Activated naive CD4-positive, alpha-beta T cell treated with anti-CD3 and anti-CD28 coated beads, Interleukin-2, amount 10 ng/mL, durations not matched to agents 7 days and 5 days (primary cell): ENCODE measurements at regions of chr3 and their contacts with region 1.

Region 1: DNA sequence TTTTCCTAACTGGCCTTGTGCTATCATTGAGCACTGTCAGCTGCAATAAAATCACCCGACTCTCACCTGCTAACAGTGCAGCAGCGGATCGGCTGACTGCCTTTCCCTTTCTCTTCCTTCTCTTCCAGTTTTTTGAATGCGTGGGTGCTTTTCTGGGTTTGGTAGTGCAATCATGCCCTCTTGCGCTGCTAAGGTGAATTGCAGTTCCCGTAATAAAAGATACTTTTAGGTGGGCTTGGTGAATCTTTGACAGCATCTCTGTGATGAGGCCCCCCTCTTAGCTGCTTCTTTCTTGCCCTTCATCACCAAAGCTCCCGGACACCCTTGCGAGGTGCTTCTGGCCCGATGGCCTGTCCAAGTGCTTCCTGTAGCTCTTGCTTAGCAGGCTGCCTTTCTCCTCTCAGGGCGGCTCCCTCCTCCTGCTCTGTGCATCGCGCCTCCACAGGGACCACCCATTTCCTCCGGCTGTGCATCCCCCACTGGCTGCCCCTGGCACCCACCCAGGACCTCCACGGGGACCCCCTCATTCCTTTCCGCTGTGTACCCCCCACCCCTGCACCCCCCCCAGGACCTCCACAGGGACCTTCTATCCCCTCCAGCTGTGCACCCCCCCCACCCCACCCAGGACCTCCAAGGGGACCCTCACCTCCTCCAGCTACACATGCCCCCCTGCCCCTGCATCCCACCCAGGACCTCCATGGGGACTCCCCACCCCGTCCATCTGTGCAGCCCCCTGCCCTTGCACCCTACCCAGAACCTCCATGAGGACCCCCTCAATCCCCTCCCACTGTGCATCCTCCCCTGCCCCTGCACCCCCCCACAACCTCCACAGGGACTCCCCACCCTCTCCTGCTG is 50.8 kb upstream of the RPL32 start:
- DNase-seq: peak; percentile 58
- H3K4me3 Mint-ChIP-seq: no peak overlapping the region
- H3K27ac Mint-ChIP-seq: no peak overlapping the region
- H3K4me1 Mint-ChIP-seq: peaks cover 5% of the 10 kb centered on the region
- H3K27me3 Mint-ChIP-seq: peaks cover 46% of the 10 kb centered on the region

Region 2: GRCh38 chr3:12689993-12690617 is 202.1 kb before region 1 on chr3:
- CTCF ChIA-PET with region 1: no interaction called
- DNase-seq: no peak
- H3K4me3 Mint-ChIP-seq: no peak overlapping the region
- H3K27ac Mint-ChIP-seq: no peak overlapping the region
- H3K4me1 Mint-ChIP-seq: no peaks in the 10 kb centered on the region
- H3K27me3 Mint-ChIP-seq: peaks cover 14% of the 10 kb centered on the region

Region 3: GRCh38 chr3:12782172-12782815 is 109.9 kb before region 1 on chr3:
- CTCF ChIA-PET with region 1: interaction called, 28 read pairs
- DNase-seq: no peak
- H3K4me3 Mint-ChIP-seq: no peak overlapping the region
- H3K27ac Mint-ChIP-seq: no peak overlapping the region
- H3K4me1 Mint-ChIP-seq: no peaks in the 10 kb centered on the region
- H3K27me3 Mint-ChIP-seq: peaks cover 20% of the 10 kb centered on the region

Region 4: DNA sequence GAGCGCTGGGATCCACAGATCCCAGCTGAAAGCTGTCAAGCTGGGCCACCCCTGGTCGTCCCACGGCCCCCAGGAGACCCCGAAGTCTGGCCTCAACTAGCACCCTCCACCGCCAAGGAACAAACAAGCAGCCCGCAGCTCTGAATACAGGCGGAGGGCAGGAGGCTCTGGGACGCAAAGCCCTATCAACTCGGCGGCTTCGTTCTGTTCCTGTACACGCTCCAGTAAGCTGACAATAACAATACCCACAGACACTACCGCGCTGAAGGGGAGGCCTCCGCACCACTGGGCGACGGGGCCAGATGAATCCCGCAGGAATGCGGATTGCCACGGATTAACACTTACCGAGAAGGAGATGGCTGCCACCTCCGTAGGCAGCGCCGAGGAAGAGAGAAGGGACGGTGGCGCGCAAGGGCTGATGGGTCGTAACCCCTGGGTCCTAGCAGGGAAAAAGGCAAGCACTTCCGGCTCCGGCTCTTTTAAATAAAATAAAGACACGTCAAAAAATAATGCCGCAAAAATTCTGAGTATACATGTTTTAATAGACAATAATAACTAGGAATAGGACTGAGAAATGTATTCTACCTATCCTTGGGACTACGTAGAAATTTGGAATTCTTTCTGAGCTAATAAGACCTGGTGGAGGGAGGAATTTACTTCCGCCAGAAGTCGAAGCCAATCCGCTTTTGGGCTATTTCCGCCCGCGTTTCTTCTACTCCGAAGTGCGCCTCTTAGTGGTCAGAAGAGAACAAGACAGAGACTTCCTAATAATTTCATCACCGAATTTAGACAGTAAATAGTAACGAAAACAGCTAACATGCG is 50.9 kb before region 1 on chr3 and contains the start of gene RPL32:
- CTCF ChIA-PET with region 1: interaction called, 10 read pairs
- DNase-seq: peak; percentile 89
- H3K4me3 Mint-ChIP-seq: peak within 1 kb of the TSS; percentile 95
- H3K27ac Mint-ChIP-seq: peak within 1 kb of the TSS; percentile 98
- H3K4me1 Mint-ChIP-seq: peaks cover 49% of the 10 kb centered on the region
- H3K27me3 Mint-ChIP-seq: no peaks in the 10 kb centered on the region

Region 5: GRCh38 chr3:12868039-12869034 is 23.9 kb before region 1 on chr3:
- CTCF ChIA-PET with region 1: interaction called, 70 read pairs
- DNase-seq: peak; percentile 66
- H3K4me3 Mint-ChIP-seq: peak overlapping the region; percentile 56
- H3K27ac Mint-ChIP-seq: no peak overlapping the region
- H3K4me1 Mint-ChIP-seq: peaks cover 11% of the 10 kb centered on the region
- H3K27me3 Mint-ChIP-seq: peaks cover 79% of the 10 kb centered on the region

Region 6: DNA sequence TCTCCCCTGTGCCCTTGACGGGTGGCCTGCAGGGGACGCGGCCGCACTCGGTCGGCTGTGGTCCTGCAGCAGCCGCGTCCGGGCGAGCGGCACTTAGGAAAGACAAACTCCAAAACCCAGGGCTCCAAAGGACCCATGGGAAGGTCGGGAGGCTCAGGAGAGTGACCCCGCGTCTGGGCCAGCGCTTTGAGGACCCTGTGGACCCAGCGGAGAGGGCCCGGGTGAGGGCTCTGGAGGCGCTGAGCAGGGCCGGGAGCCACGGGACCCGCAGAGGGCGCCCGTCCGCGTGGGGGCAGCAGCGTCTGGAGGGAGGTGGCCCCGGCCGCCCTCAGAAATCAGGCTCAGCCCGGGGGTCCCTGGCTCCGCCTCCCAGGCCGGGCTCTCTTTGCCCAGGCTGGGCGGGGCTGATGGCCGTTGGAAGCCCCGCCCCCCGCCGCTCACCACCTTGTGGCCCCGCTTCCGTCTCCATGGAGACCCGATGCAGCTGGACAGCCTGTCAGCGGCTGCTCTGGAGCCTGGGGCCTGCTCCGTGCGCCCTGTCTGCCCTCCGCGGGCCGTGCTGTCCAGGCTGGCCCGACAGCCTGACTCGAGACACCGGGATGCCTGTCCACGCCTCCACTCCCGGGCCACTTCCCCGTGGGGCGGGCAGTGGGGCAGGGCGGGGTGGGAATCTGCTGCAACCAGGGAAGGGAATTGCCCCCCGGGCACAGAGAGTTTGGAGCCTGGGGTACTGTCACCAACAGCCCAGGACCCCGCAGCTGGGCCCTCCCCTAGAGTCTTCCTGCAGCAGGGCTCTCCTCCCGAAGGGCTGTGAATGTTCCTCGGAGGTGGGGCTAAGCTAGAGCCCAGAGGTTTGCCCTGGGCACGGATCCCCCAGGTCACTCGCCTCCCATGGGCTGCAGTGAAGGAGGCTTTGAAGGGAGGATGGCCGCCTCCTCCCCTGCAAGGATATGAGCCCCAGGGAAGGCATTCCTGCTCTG is 16.1 kb before region 1 on chr3:
- CTCF ChIA-PET with region 1: interaction called, 70 read pairs
- DNase-seq: peak; percentile 35
- H3K4me3 Mint-ChIP-seq: no peak overlapping the region
- H3K27ac Mint-ChIP-seq: no peak overlapping the region
- H3K4me1 Mint-ChIP-seq: no peaks in the 10 kb centered on the region
- H3K27me3 Mint-ChIP-seq: peaks cover 84% of the 10 kb centered on the region

Region 7: GRCh38 chr3:12984023-12984823 is 92.0 kb after region 1 on chr3:
- CTCF ChIA-PET with region 1: interaction called, 18 read pairs
- DNase-seq: peak; percentile 70
- H3K4me3 Mint-ChIP-seq: no peak overlapping the region
- H3K27ac Mint-ChIP-seq: no peak overlapping the region
- H3K4me1 Mint-ChIP-seq: peaks cover 33% of the 10 kb centered on the region
- H3K27me3 Mint-ChIP-seq: no peaks in the 10 kb centered on the region